PC-3 (cell line): ENCODE measurements at regions of chr1 and their contacts with region 1.

Region 1: DNA sequence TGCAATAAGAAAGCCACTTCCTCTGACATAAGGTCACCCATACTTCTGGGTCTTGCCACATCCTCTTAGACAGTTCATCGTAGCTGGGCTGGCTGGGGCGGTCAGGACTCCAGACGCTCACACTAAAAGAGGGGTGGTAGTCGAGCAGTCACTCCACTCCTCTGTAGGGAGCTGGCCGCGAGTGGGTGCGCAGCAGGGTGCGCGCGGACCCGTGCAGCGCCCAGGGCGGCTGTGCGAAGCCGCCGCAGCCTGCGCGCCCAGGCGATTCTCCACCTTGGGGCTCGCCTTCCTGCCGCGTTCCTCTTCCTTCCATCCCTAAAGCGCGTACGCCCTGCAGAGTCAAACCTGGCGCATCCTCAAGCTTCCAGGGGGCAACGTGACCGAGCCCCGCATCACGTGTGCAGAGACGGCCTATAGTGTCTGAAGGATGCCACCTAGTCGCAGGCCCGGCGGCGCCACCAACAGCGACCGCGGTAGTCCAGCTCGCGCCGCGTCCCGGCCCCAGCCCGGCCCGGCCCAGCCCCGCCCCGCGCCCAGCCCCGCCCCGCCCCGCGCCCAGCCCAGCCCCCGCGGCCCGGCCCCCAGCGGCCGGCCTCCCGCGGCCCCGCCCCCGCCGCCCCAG is 360 bp upstream of the PRDX6 start:
- DNase-seq: peak; percentile 100
- ATAC-seq: peak; percentile 77
- H3K4me3 ChIP-seq: peak overlapping the region; percentile 74
- H3K27ac ChIP-seq: peak overlapping the region; percentile 68
- H3K4me1 ChIP-seq: peaks cover 60% of the 10 kb centered on the region
- H3K27me3 ChIP-seq: no peaks in the 10 kb centered on the region
- CTCF ChIP-seq: no peak; the same call in 1 of the 2 replicates

Region 2: DNA sequence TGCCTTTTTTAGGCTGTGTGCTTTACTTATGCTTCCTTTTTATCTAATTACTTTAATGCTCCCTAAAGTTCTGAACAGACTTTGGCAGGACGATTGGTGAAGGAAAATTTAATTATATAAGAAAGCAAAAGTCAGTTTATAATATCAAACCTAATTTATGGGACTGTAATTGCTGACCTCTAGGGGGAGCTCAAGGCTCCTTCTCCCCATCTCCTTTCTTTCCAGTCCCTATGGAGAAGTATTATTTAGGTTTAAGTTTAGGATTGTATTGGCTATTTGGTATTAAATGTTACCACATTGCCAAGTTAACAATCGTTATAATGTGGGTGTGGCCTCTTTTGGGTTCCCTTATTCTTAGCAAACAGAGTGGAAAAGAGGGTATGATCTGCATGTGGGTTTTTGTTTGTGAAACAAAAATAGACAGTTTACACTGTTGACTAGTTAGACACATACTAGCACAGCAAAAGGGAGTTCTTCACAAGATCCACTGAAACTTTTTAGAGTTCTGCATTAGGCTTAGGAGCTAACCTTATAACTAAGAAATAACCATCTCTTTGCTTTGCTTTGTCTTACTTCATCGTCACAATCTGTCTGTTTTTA is 221.5 kb before region 1 on chr1:
- CTCF ChIA-PET with region 1: interaction called, 3 read pairs
- POLR2A ChIA-PET with region 1: no interaction called
- intact Hi-C with region 1: loop called (anchors 1 kb)
- DNase-seq: peak; percentile 90
- ATAC-seq: peak; percentile 90
- H3K4me3 ChIP-seq: no peak overlapping the region
- H3K27ac ChIP-seq: no peak overlapping the region
- H3K4me1 ChIP-seq: no peaks in the 10 kb centered on the region
- H3K27me3 ChIP-seq: no peaks in the 10 kb centered on the region
- CTCF ChIP-seq: peak; percentile 100

Region 3: GRCh38 chr1:173276922-173277800 is 199.6 kb before region 1 on chr1:
- CTCF ChIA-PET with region 1: no interaction called
- POLR2A ChIA-PET with region 1: no interaction called
- intact Hi-C with region 1: no loop called
- DNase-seq: no peak
- ATAC-seq: peak; percentile 62
- H3K4me3 ChIP-seq: no peak overlapping the region
- H3K27ac ChIP-seq: no peak overlapping the region
- H3K4me1 ChIP-seq: no peaks in the 10 kb centered on the region
- H3K27me3 ChIP-seq: no peaks in the 10 kb centered on the region
- CTCF ChIP-seq: no peak

Region 4: GRCh38 chr1:173520799-173521198 is 44.0 kb after region 1 on chr1:
- CTCF ChIA-PET with region 1: no interaction called
- POLR2A ChIA-PET with region 1: interaction called, 10 read pairs
- intact Hi-C with region 1: no loop called
- DNase-seq: peak; percentile 50
- ATAC-seq: peak; percentile 76
- H3K4me3 ChIP-seq: no peak overlapping the region
- H3K27ac ChIP-seq: no peak overlapping the region
- H3K4me1 ChIP-seq: no peaks in the 10 kb centered on the region
- H3K27me3 ChIP-seq: no peaks in the 10 kb centered on the region
- CTCF ChIP-seq: no peak

Region 5: DNA sequence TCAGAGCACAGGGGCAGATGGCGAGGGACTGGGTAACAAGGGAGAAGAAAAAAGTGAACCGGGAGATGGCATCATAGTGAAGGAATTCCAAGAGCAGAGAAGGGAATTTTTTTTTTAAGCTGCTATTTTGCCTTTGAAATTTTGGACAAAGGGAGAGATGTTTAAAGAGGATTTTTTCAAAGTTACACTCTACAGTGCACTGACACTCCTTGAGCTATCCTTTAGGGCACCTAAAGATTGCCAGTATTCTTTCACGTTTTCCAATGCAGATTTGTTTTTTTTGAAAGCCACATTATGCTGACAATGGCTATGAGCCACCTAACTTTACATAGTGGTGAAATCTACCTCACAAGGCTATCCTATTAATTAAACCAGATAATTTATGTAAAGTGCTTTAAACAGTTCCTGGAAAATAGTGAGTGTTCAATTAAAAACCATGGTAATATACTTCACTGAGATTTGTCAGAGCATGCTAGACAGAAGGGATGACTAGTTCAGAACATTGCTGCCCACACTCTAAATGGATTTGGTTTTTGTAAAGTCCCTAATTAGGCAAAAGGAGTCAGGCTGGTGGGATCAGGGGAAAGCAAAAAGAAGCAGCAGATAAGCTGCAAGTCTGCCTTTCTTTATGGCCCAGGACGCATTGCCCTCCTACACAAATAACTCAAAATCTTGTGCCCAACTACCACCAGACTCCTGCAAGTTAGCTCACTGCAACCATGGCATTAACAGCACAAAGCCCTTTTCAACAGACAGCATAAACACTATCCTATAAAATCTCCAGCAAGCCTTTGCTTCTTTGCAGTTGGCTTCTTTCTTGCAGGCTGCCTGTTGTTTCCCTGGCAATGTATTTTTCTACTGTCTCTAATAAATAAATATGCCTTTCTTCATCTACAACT is 54.3 kb after region 1 on chr1:
- CTCF ChIA-PET with region 1: no interaction called
- POLR2A ChIA-PET with region 1: no interaction called
- intact Hi-C with region 1: no loop called
- DNase-seq: no peak
- ATAC-seq: no peak
- H3K4me3 ChIP-seq: no peak overlapping the region
- H3K27ac ChIP-seq: no peak overlapping the region
- H3K4me1 ChIP-seq: no peaks in the 10 kb centered on the region
- H3K27me3 ChIP-seq: no peaks in the 10 kb centered on the region
- CTCF ChIP-seq: no peak

Region 6: GRCh38 chr1:173554541-173555250 is 77.9 kb after region 1 on chr1:
- CTCF ChIA-PET with region 1: no interaction called
- POLR2A ChIA-PET with region 1: interaction called, 3 read pairs
- intact Hi-C with region 1: loop called (anchors 1 kb)
- DNase-seq: peak; percentile 98
- ATAC-seq: peak; percentile 98
- H3K4me3 ChIP-seq: 0 out of 2 replicates have a peak overlapping the region, but pooled peaks have one; percentile 1
- H3K27ac ChIP-seq: peak overlapping the region; percentile 69
- H3K4me1 ChIP-seq: peaks cover 26% of the 10 kb centered on the region
- H3K27me3 ChIP-seq: no peaks in the 10 kb centered on the region
- CTCF ChIP-seq: no peak

Region 7: GRCh38 chr1:173688300-173688699 is 211.5 kb after region 1 on chr1:
- CTCF ChIA-PET with region 1: interaction called, 4 read pairs
- POLR2A ChIA-PET with region 1: no interaction called
- intact Hi-C with region 1: loop called (anchors 5 kb)
- DNase-seq: no peak
- ATAC-seq: no peak
- H3K4me3 ChIP-seq: no peak overlapping the region
- H3K27ac ChIP-seq: no peak overlapping the region
- H3K4me1 ChIP-seq: peaks cover 12% of the 10 kb centered on the region; the same call in 1 of the 2 replicates
- H3K27me3 ChIP-seq: no peaks in the 10 kb centered on the region
- CTCF ChIP-seq: no peak

Region 8: GRCh38 chr1:173714759-173715537 is 238.2 kb after region 1 on chr1 and contains the start of gene KLHL20:
- CTCF ChIA-PET with region 1: no interaction called
- POLR2A ChIA-PET with region 1: interaction called, 3 read pairs
- intact Hi-C with region 1: loop called (anchors 1 kb)
- DNase-seq: peak; percentile 100
- ATAC-seq: peak; percentile 97
- H3K4me3 ChIP-seq: peak within 1 kb of the TSS; percentile 72
- H3K27ac ChIP-seq: peak within 1 kb of the TSS; percentile 33
- H3K4me1 ChIP-seq: peaks cover 20% of the 10 kb centered on the region
- H3K27me3 ChIP-seq: no peaks in the 10 kb centered on the region
- CTCF ChIP-seq: peak; percentile 49
- total RNA-seq, gene KLHL20: 46.2 and 46.4 TPM in 2 replicates

Region 9: DNA sequence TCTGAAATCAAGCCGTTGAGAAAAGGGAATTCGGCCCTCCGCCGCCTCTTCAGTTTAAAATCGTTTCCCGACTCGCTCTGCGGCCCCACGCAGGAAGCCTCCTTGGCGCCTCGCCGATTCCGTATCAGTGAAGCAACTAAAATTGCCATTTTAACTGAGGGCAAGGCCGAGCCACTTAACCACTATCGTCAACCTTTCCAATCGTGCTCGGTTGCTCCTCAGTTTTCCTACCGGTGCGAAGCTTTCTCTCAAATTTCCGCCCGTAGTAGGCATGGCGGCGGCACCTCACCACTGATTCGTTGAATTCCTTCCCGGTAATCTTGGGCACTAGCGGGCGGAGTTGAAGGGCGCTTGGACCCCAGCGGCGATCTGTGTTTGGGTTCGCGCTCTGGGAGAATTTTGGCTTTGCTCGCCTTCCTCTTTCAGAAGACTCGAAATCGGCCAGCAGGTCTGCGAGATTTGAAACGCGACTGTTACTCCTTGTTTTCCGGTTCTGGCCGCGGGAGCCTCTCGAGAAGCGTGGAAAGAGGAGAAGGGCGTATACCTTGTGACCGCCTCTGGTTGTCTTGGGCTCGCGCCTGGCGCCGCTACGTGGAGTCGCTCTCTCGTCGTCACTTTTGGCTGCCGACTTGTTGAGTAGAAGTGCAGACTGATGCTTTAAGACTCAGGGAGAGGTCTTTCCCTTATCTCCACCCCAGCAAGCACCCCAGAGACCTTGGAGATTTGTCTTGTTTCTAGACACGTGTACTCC is 347.7 kb after region 1 on chr1 and contains the starts of genes CENPL and DARS2:
- CTCF ChIA-PET with region 1: no interaction called
- POLR2A ChIA-PET with region 1: interaction called, 4 read pairs
- intact Hi-C with region 1: loop called (anchors 1 kb)
- DNase-seq: peak; percentile 100
- ATAC-seq: peak; percentile 88
- H3K4me3 ChIP-seq: peak within 1 kb of the TSS; percentile 72
- H3K27ac ChIP-seq: peak within 1 kb of the TSS; percentile 81
- H3K4me1 ChIP-seq: peaks cover 56% of the 10 kb centered on the region
- H3K27me3 ChIP-seq: no peaks in the 10 kb centered on the region
- CTCF ChIP-seq: no peak
- total RNA-seq, gene CENPL: 92.8 and 108 TPM in 2 replicates
- total RNA-seq, gene DARS2: 71.8 and 77.3 TPM in 2 replicates